ENCODE measurements at regions of chr9 and their contacts with region 1.

Region 1: GRCh38 chr9:96619491-96620154 is at the start of gene CDC14B:
- DNase-seq: peak; percentile 77 to 95
- H3K4me3 ChIP-seq: peak within 1 kb of the TSS; percentile 98
- H3K27ac ChIP-seq: peak within 1 kb of the TSS; percentile 91 to 93
- H3K4me1 ChIP-seq: no peaks in the 10 kb centered on the region
- H3K27me3 ChIP-seq: no peaks in the 10 kb centered on the region
- CTCF ChIP-seq: peak in 1 of 3 experiments; percentile 37
- total RNA-seq, gene CDC14B: 47.8 TPM

Region 2: GRCh38 chr9:96383165-96383942 is 236.3 kb before region 1 on chr9 and contains the start of gene SLC35D2:
- intact Hi-C with region 1: loop called (anchors 5 kb)
- DNase-seq: peak in 1 of 2 donors; percentile 79
- H3K4me3 ChIP-seq: peak within 1 kb of the TSS; percentile 79 to 94
- H3K27ac ChIP-seq: peak within 1 kb of the TSS; percentile 90 to 93
- H3K4me1 ChIP-seq: peaks cover 0 to 13% of the 10 kb centered on the region in 2 donors
- H3K27me3 ChIP-seq: no peaks in the 10 kb centered on the region
- CTCF ChIP-seq: no peak
- total RNA-seq, gene SLC35D2: 11.9 TPM

Region 3: GRCh38 chr9:96486368-96487028 is 133.1 kb before region 1 on chr9:
- intact Hi-C with region 1: loop called (anchors 10 kb)
- DNase-seq: peak in 1 of 2 donors; percentile 88
- H3K4me3 ChIP-seq: peak overlapping the region in 1 of 2 donors; percentile 12
- H3K27ac ChIP-seq: peak overlapping the region; percentile 92 to 93
- H3K4me1 ChIP-seq: peaks cover 19 to 57% of the 10 kb centered on the region in 2 donors
- H3K27me3 ChIP-seq: no peaks in the 10 kb centered on the region
- CTCF ChIP-seq: no peak

Region 4: GRCh38 chr9:96505316-96505991 is 114.2 kb before region 1 on chr9:
- intact Hi-C with region 1: no loop called
- DNase-seq: peak in 1 of 2 donors; percentile 71
- H3K4me3 ChIP-seq: no peak overlapping the region
- H3K27ac ChIP-seq: peak overlapping the region; percentile 53 to 58
- H3K4me1 ChIP-seq: peaks cover 6 to 42% of the 10 kb centered on the region in 2 donors
- H3K27me3 ChIP-seq: no peaks in the 10 kb centered on the region
- CTCF ChIP-seq: no peak

Region 5: GRCh38 chr9:96566498-96567207 is 53.0 kb before region 1 on chr9:
- intact Hi-C with region 1: loop called (anchors 2 kb)
- DNase-seq: peak; percentile 24 to 91
- H3K4me3 ChIP-seq: peak overlapping the region; percentile 70 to 88
- H3K27ac ChIP-seq: peak overlapping the region; percentile 86 to 96
- H3K4me1 ChIP-seq: peaks cover 0 to 11% of the 10 kb centered on the region in 2 donors
- H3K27me3 ChIP-seq: no peaks in the 10 kb centered on the region
- CTCF ChIP-seq: peak; percentile 72 to 80 (median 78)